HepG2 (cell line): ENCODE measurements at regions of chr13 and their contacts with region 1.

Region 1: DNA sequence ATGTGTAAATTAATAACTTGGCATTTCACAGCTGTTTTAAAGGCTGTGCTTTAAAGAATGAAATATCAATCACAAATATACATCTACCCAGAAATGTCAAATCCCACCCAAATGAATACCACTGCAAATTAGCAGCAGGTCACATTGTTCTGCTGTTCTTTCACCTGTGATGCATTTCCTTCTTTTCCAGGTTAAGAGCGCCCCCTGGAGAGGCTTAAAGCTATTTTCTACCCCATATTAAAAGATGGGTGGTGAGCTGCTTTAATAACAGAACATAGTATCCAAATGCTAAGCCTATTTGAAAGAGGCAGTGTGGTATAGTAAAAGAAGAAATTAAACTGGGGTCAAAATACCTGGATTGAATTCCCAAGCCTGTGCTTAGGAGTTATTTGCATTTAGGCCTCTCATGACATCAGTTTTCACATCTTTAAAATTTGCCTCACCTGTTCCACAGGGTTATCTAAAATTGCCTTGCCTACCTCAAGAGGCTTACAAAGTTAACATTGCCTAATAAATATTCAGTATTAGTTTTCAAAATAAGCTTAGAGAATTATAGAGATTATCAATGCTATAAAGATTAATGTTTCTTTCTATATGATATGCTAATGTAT is 396.9 kb upstream of the SLITRK5 start:
- DNase-seq: peak; percentile 43
- ATAC-seq: peak; percentile 84
- H3K4me3 ChIP-seq: no peak overlapping the region
- H3K27ac ChIP-seq: no peak overlapping the region
- H3K4me1 ChIP-seq: no peaks in the 10 kb centered on the region
- H3K27me3 ChIP-seq: no peaks in the 10 kb centered on the region
- CTCF ChIP-seq: peak; percentile 69
- EP300 ChIP-seq: no peak
- POLR2A ChIP-seq: no peak
- RAD21 ChIP-seq: no peak

Region 2: DNA sequence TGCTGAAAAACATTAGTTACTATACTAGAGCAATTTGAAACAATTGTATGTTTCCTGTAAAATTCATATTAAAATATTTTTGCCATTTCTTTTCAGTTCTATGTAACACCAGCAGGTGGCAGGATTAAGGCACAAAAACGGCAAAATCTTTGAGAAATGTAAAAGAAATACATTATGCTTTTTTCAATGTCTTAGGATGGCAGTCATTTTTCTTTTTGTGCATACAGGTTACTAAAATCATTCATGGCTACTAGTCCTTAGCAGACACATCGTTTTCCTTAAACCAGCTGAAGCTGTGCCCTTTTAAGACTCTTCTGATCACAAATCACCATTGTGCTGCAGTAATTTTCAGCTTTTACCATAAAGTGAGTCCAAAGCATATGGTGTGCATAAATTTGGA is 403.9 kb before region 1 on chr13:
- CTCF ChIA-PET with region 1: interaction called, 25 read pairs
- POLR2A ChIA-PET with region 1: no interaction called
- in situ Hi-C with region 1: no loop called
- intact Hi-C with region 1: loop called (anchors 1 kb)
- DNase-seq: peak; percentile 3
- ATAC-seq: no peak
- H3K4me3 ChIP-seq: no peak overlapping the region
- H3K27ac ChIP-seq: no peak overlapping the region
- H3K4me1 ChIP-seq: no peaks in the 10 kb centered on the region
- H3K27me3 ChIP-seq: no peaks in the 10 kb centered on the region
- CTCF ChIP-seq: peak; percentile 52
- EP300 ChIP-seq: no peak
- POLR2A ChIP-seq: no peak
- RAD21 ChIP-seq: no peak

Region 3: DNA sequence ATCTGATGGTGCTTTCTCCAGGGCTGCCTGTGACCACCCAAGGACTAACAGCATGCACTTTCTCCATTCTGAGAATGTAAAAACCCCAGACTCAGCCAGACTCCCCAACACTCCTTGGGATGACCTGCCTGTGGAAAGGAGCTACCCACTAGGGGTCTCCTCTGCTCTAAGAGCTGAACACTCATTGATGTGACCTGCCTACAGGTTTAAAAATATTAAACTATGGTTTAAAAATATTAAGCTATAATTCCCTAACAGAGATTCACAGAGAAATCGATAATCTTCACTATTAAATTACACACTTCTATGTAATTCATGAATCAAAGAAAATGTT is 299.4 kb before region 1 on chr13:
- CTCF ChIA-PET with region 1: no interaction called
- POLR2A ChIA-PET with region 1: no interaction called
- in situ Hi-C with region 1: no loop called
- intact Hi-C with region 1: loop called (anchors 1 kb)
- DNase-seq: no peak
- ATAC-seq: peak; percentile 78
- H3K4me3 ChIP-seq: no peak overlapping the region
- H3K27ac ChIP-seq: no peak overlapping the region
- H3K4me1 ChIP-seq: no peaks in the 10 kb centered on the region
- H3K27me3 ChIP-seq: no peaks in the 10 kb centered on the region
- CTCF ChIP-seq: 0 out of 2 replicates have a peak, but pooled peaks have one; percentile 25
- EP300 ChIP-seq: no peak
- POLR2A ChIP-seq: no peak
- RAD21 ChIP-seq: no peak